ENCODE measurements at regions of chr12 and their contacts with region 1.

Region 1: DNA sequence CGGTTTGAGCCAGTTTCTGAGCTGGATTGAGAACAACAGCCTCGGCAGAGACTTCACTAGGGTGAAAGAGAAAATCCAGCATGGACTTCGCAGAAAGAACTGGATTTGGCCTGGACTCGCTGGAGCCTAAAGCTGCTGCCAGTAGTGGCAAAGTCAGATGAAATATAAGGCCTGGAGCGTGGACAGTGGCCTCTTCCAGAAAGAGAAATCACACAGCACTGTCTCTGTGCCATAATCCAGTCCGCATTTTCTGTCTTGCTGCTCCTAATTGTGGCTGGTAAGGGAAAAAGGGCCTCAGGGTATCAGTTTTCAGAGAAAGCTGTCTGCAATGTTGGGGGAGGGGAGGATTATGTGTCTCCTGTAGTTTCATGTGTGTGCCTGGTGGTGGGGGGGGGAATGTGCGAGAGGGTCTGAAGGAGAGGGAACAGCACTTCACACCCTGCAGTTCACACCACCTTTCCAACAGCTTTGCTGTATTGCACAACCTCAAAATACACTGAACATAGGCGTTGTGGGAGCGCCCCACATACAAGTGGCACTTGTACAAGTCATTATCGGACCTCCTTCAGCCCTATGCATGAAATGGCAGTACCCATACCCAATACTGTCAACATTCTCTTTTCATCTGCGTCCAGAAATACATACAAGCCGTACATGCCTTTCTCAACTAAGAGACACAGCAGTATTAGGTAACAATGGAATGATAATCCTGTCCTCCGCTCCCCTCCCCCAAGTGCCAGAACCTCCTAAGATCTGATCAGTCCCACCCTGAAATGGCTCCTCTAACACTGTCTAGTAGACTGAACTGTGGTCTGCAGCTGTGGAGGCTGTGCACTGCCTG is 107.5 kb upstream of the ATF7IP start:
- DNase-seq: peak in 4 of 5 donors; percentile 94 to 97 (median 94)
- ATAC-seq: peak; percentile 82 to 87 (median 85)
- H3K4me3 ChIP-seq: peak overlapping the region in 8 of 12 donors; percentile 8 to 38 (median 26)
- H3K27ac ChIP-seq: peak overlapping the region; percentile 85 to 98 (median 88)
- H3K4me1 ChIP-seq: peaks cover 4 to 80% (median 46%) of the 10 kb centered on the region in 12 donors
- H3K27me3 ChIP-seq: peaks cover 0 to 3% (median 0%) of the 10 kb centered on the region in 9 donors
- CTCF ChIP-seq: peak in 1 of 12 donors; percentile 8
- POLR2A ChIP-seq: peak in 1 of 2 donors; percentile 53

Region 2: DNA sequence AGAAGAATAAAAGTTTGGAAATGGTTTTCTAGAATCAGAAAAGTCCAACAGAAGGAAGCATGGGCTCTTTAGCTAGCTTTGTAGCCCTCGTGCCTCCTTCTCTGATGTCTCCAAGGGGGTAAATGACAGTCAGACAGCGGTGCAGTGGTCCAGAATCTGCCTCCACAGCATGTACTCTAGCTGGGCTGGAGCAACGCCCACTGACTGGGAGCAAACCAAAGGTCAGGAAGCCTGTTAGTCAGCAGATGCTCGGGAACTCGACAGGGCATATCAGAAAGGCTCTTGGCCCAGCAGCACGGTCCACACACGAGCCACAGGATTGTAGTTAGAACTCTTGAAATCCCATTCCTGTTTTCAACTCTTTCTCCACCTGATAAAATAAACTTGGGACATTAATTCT is 440.8 kb before region 1 on chr12:
- intact Hi-C with region 1: no loop called
- DNase-seq: peak in 1 of 5 donors; percentile 31
- ATAC-seq: no peak
- H3K4me3 ChIP-seq: no peak overlapping the region
- H3K27ac ChIP-seq: no peak overlapping the region
- H3K4me1 ChIP-seq: no peaks in the 10 kb centered on the region
- H3K27me3 ChIP-seq: no peaks in the 10 kb centered on the region
- CTCF ChIP-seq: no peak
- POLR2A ChIP-seq: no peak

Region 3: GRCh38 chr12:14384783-14385638 is 127.1 kb after region 1 on chr12:
- intact Hi-C with region 1: loop called in 5 of 10 experiments (anchors 1 to 5 kb)
- DNase-seq: peak in 4 of 5 donors; percentile 43 to 64 (median 50)
- ATAC-seq: peak; percentile 95 to 97 (median 96)
- H3K4me3 ChIP-seq: peak overlapping the region; percentile 3 to 54 (median 42)
- H3K27ac ChIP-seq: peak overlapping the region; percentile 61 to 84 (median 79)
- H3K4me1 ChIP-seq: peaks cover 0 to 60% (median 17%) of the 10 kb centered on the region in 12 donors
- H3K27me3 ChIP-seq: no peaks in the 10 kb centered on the region
- CTCF ChIP-seq: no peak
- POLR2A ChIP-seq: peak in 1 of 2 donors; percentile 21

Region 4: GRCh38 chr12:14417715-14418114 is 159.8 kb after region 1 on chr12:
- intact Hi-C with region 1: loop called in 7 of 10 experiments (anchors 2 to 10 kb)
- DNase-seq: peak; percentile 63 to 83 (median 73)
- ATAC-seq: peak; percentile 67 to 88 (median 86)
- H3K4me3 ChIP-seq: peak overlapping the region in 10 of 12 donors; percentile 8 to 39 (median 18)
- H3K27ac ChIP-seq: peak overlapping the region in 11 of 12 donors; percentile 10 to 69 (median 39)
- H3K4me1 ChIP-seq: peaks cover 6 to 86% (median 56%) of the 10 kb centered on the region in 12 donors
- H3K27me3 ChIP-seq: no peaks in the 10 kb centered on the region
- CTCF ChIP-seq: no peak
- POLR2A ChIP-seq: no peak